Ascending aorta (tissue), 2 donors: ENCODE measurements at regions of chr9 and their contacts with region 1.

Region 1: GRCh38 chr9:70602321-70603019 is 188.0 kb upstream of the KLF9 start:
- DNase-seq: peak in 1 of 2 donors; percentile 78
- H3K4me3 ChIP-seq: peak overlapping the region in 1 of 2 donors; percentile 18
- H3K27ac ChIP-seq: peak overlapping the region; percentile 87 to 88
- H3K4me1 ChIP-seq: peaks cover 0 to 21% of the 10 kb centered on the region in 2 donors
- H3K27me3 ChIP-seq: no peaks in the 10 kb centered on the region
- CTCF ChIP-seq: peak; percentile 70 to 84 (median 80)

Region 2: GRCh38 chr9:70258692-70259511 is 343.6 kb before region 1 on chr9 and contains the start of gene SMC5:
- intact Hi-C with region 1: loop called (anchors 2 kb)
- DNase-seq: peak; percentile 47 to 96
- H3K4me3 ChIP-seq: peak within 1 kb of the TSS; percentile 75 to 98
- H3K27ac ChIP-seq: peak within 1 kb of the TSS; percentile 84 to 96
- H3K4me1 ChIP-seq: peaks cover 6 to 43% of the 10 kb centered on the region in 2 donors
- H3K27me3 ChIP-seq: no peaks in the 10 kb centered on the region
- CTCF ChIP-seq: no peak
- total RNA-seq, gene SMC5: 13.9 TPM

Region 3: DNA sequence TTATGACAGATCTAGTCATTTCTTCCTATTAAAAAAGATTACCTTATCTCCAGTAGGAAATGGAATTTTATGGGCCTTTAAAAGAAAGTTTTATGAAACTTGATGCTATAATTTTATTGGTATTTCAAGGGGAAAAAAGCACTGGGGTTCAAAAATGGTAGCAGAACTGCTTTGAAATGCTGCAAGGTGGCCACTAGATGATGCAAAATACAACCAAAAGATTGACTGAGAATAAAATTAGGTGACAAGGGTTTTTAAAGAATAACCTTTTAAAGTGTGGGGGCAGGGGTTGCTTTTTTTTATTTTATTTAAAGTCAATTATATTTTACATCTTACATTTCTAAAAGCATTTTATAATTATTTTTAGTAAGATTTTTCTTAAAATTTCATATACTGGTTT is 249.7 kb before region 1 on chr9:
- intact Hi-C with region 1: loop called (anchors 2 kb)
- DNase-seq: no peak
- H3K4me3 ChIP-seq: no peak overlapping the region
- H3K27ac ChIP-seq: peak overlapping the region in 1 of 2 donors; percentile 14
- H3K4me1 ChIP-seq: no peaks in the 10 kb centered on the region
- H3K27me3 ChIP-seq: no peaks in the 10 kb centered on the region
- CTCF ChIP-seq: peak; percentile 44 to 67 (median 61)

Region 4: GRCh38 chr9:70419546-70420266 is 182.8 kb before region 1 on chr9:
- intact Hi-C with region 1: loop called (anchors 1 kb)
- DNase-seq: peak; percentile 93 to 98
- H3K4me3 ChIP-seq: peak overlapping the region; percentile 54 to 75
- H3K27ac ChIP-seq: peak overlapping the region; percentile 100
- H3K4me1 ChIP-seq: peaks cover 14 to 43% of the 10 kb centered on the region in 2 donors
- H3K27me3 ChIP-seq: no peaks in the 10 kb centered on the region
- CTCF ChIP-seq: peak in 2 of 3 experiments; percentile 9 to 17

Region 5: DNA sequence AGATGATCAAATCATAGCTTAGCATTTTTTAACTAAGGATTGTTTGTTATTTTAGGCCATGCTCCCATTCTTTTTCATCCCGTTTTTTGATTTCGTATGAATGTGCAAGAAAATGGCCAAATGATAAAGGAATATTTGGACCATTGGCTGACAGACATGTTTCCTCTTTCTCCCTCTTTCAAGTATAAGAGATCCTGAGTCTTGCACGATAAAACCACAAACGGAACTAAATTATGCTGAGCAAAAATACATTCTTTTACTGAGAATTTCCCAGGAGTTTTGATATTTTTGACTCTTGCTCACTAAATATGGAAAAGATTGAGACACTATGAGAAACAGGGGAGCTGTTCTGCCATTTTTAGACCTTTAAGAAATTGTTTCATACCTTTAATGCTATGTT is 97.6 kb before region 1 on chr9:
- intact Hi-C with region 1: loop called (anchors 5 kb)
- DNase-seq: no peak
- H3K4me3 ChIP-seq: no peak overlapping the region
- H3K27ac ChIP-seq: peak overlapping the region; percentile 77 to 82
- H3K4me1 ChIP-seq: peaks cover 0 to 46% of the 10 kb centered on the region in 2 donors
- H3K27me3 ChIP-seq: no peaks in the 10 kb centered on the region
- CTCF ChIP-seq: no peak

Region 6: GRCh38 chr9:70587201-70587600 is 15.3 kb before region 1 on chr9:
- intact Hi-C with region 1: loop called (anchors 1 kb)
- DNase-seq: peak in 1 of 2 donors; percentile 78
- H3K4me3 ChIP-seq: no peak overlapping the region
- H3K27ac ChIP-seq: peak overlapping the region; percentile 91 to 93
- H3K4me1 ChIP-seq: peaks cover 10 to 54% of the 10 kb centered on the region in 2 donors
- H3K27me3 ChIP-seq: no peaks in the 10 kb centered on the region
- CTCF ChIP-seq: peak in 1 of 3 experiments; percentile 6